Head of caudate nucleus (tissue), 42 donors: ENCODE measurements at regions of chr16 and their contacts with region 1.

Region 1: GRCh38 chr16:66735891-66736290 is 15.5 kb downstream of the DYNC1LI2 start:
- DNase-seq: peak in 3 of 42 donors; percentile 7 to 9 (median 8)

Region 2: DNA sequence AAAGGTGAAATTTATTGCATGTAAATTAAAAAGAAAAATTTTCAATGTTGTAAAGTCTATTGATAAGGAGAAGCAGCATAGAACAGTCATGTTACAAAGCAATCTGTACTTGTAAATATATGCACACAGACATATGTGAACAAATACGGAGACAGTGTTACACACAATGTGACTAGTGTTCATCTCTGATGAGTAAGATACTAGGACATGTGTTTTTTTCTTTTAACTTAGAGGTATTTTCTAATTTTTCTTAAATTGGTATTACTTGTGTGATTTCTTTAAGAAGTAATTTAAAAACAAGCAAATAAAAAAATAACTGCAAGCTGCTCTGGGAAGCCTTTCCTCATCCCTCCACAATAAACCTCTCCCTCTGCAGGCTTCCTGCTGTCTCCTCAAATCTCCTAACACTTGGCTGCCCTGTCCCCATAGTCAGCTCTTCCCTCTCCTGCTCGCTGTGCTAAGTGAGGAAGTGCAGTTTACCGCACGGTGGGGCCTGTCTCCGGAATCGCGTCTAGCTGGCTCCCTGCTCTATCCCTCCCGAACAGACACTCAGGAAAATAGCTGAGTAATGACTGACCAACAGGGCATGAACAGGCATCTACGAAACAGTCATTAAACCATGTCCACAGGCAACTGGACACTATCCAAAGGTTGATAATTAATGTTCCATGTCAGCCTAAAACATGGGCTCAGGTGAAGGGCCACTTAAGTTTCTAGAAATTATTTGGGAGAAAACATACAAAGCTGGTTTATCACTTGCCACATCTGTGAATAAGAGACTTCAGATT is 75.3 kb before region 1 on chr16:
- intact Hi-C with region 1: loop called (anchors 10 kb)
- DNase-seq: peak; percentile 51 to 85 (median 70)